ENCODE measurements at regions of chr1 and their contacts with region 1.

Region 1: GRCh38 chr1:18597160-18598042 is 33.2 kb upstream of the PAX7 start:
- DNase-seq: peak in 1 of 2 donors; percentile 69
- H3K4me3 ChIP-seq: no peak overlapping the region
- H3K27ac ChIP-seq: no peak overlapping the region
- H3K4me1 ChIP-seq: no peaks in the 10 kb centered on the region
- H3K27me3 ChIP-seq: peaks cover 7% of the 10 kb centered on the region
- CTCF ChIP-seq: peak; percentile 65 to 83 (median 73)

Region 2: GRCh38 chr1:18398791-18399530 is 198.4 kb before region 1 on chr1:
- intact Hi-C with region 1: no loop called
- DNase-seq: no peak
- H3K4me3 ChIP-seq: no peak overlapping the region
- H3K27ac ChIP-seq: no peak overlapping the region
- H3K4me1 ChIP-seq: no peaks in the 10 kb centered on the region
- H3K27me3 ChIP-seq: no peaks in the 10 kb centered on the region
- CTCF ChIP-seq: no peak

Region 3: DNA sequence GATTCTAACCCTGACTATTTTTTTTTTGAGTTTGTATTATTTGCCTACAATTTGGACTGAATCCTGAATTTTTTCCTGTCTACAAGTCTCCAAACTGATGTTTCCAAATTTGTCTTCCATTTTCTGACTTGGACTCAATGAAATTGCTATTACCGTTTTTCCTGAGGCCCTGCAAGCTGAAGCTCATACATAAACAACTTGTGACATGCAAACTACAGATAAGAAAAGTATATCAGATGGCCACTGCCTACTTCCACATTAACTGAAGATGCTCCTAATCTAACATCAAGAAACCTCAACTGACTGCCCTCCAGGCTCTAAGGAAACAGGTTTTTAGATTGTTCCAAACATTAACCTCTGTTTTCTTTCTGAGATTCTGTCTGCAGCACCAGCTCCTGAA is 167.7 kb before region 1 on chr1:
- intact Hi-C with region 1: no loop called
- DNase-seq: no peak
- H3K4me3 ChIP-seq: no peak overlapping the region
- H3K27ac ChIP-seq: no peak overlapping the region
- H3K4me1 ChIP-seq: no peaks in the 10 kb centered on the region
- H3K27me3 ChIP-seq: no peaks in the 10 kb centered on the region
- CTCF ChIP-seq: no peak

Region 4: GRCh38 chr1:18556364-18556763 is 41.0 kb before region 1 on chr1:
- intact Hi-C with region 1: no loop called
- DNase-seq: no peak
- H3K4me3 ChIP-seq: no peak overlapping the region
- H3K27ac ChIP-seq: no peak overlapping the region
- H3K4me1 ChIP-seq: no peaks in the 10 kb centered on the region
- H3K27me3 ChIP-seq: peaks cover 7% of the 10 kb centered on the region
- CTCF ChIP-seq: no peak

Region 5: DNA sequence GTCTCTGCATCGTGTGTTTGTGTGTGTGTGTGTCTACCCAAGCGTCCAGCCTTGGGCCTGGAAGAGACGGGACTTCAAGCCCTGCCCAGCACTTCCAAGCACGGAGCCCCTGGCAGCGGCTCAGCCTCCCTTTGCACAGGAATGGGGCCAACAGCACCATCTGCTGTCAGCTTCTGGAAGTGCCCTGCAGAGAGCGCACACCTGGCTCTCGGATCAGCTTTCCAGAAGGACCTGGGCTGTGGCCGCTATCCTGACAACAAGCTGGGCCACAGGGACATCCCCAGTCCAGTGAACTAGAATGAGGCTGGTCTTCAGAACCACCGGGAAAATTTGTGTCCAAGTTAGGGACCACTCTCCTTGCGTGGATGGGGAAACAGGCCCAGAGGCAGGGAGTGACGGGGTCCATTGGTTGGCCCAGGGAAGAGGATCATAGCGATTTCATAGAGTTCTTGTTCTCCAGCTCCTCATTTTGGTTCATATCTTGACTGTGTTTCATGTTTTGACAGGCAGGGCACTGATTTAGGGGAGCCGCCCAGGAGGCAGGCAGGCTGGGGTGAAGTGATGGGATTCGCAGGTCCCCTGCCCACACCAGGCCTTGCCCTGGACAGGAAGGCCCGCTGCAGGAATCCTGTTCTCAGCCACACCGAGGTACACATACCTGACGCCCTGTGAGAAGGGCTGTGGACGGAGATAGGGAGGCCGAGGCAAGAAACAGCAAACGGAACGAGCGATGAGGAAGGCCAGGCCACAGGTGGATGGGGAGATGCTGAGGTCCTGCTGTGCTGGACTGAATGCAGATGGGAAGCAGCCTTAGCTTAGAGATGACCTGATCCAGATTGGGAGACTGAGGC is 223.6 kb after region 1 on chr1:
- intact Hi-C with region 1: loop called (anchors 2 kb)
- DNase-seq: peak in 1 of 2 donors; percentile 72
- H3K4me3 ChIP-seq: no peak overlapping the region
- H3K27ac ChIP-seq: no peak overlapping the region
- H3K4me1 ChIP-seq: no peaks in the 10 kb centered on the region
- H3K27me3 ChIP-seq: no peaks in the 10 kb centered on the region
- CTCF ChIP-seq: peak; percentile 35 to 85 (median 70)

Region 6: GRCh38 chr1:18875107-18875795 is 277.9 kb after region 1 on chr1:
- intact Hi-C with region 1: loop called (anchors 5 kb)
- DNase-seq: peak in 1 of 2 donors; percentile 82
- H3K4me3 ChIP-seq: no peak overlapping the region
- H3K27ac ChIP-seq: no peak overlapping the region
- H3K4me1 ChIP-seq: no peaks in the 10 kb centered on the region
- H3K27me3 ChIP-seq: no peaks in the 10 kb centered on the region
- CTCF ChIP-seq: peak; percentile 59 to 80 (median 76)